PC-3 (cell line): ENCODE measurements at regions of chr2 and their contacts with region 1.

Region 1: GRCh38 chr2:97697252-97698235 is 15.8 kb upstream of the ZAP70 start:
- DNase-seq: peak; percentile 89
- ATAC-seq: peak; percentile 88
- H3K4me3 ChIP-seq: peak overlapping the region; percentile 36; the same call in 1 of the 2 replicates
- H3K27ac ChIP-seq: no peak overlapping the region
- H3K4me1 ChIP-seq: 0 out of 2 replicates have a peak, but pooled peaks cover 5% of the 10 kb centered on the region
- H3K27me3 ChIP-seq: no peaks in the 10 kb centered on the region
- CTCF ChIP-seq: peak; percentile 95

Region 2: GRCh38 chr2:97653473-97653872 is 44.1 kb before region 1 on chr2:
- CTCF ChIA-PET with region 1: no interaction called
- POLR2A ChIA-PET with region 1: no interaction called
- intact Hi-C with region 1: no loop called
- DNase-seq: peak; percentile 21
- ATAC-seq: peak; percentile 40; the same call in 1 of the 2 replicates
- H3K4me3 ChIP-seq: no peak overlapping the region
- H3K27ac ChIP-seq: no peak overlapping the region
- H3K4me1 ChIP-seq: no peaks in the 10 kb centered on the region
- H3K27me3 ChIP-seq: no peaks in the 10 kb centered on the region
- CTCF ChIP-seq: no peak

Region 3: DNA sequence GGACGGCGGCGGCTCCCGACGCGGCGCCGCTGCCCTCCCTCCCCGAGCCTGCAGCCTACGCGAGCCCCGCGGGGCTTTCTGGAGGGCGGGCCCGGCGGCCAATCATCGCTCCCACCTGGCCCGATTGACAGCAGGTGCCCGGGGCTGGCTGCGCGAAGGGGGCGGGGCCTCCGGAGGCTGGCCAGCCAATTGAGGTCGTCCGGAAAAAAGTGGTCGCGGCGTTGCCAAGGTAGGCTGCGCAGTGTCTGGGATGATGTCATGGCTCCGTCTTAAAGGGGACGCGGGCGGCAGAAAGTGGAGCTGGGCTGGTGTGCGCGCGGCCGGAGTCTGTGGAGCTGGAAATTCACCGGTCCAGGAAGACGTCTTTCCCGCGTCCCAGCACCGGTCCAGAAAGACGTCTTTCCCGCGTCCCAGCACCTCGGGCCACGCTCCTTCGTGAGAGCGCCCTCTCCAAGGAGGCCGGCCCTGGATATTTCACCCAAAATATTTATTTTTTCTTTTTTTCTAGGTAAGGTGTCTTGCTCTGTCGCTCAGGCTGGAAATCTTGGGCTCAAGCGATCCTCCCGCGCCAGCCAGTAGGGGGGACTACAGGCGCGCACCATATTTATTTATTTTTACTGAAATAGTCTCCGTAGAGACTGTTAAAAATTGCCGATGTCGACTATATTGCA is 33.4 kb before region 1 on chr2 and contains the start of gene ACTR1B:
- CTCF ChIA-PET with region 1: interaction called, 8 read pairs
- POLR2A ChIA-PET with region 1: interaction called, 4 read pairs
- intact Hi-C with region 1: loop called (anchors 1 kb)
- DNase-seq: peak; percentile 98
- ATAC-seq: peak; percentile 82
- H3K4me3 ChIP-seq: peak within 1 kb of the TSS; percentile 83
- H3K27ac ChIP-seq: peak within 1 kb of the TSS; percentile 77
- H3K4me1 ChIP-seq: peaks cover 24% of the 10 kb centered on the region
- H3K27me3 ChIP-seq: no peaks in the 10 kb centered on the region
- CTCF ChIP-seq: peak; percentile 71
- total RNA-seq, gene ACTR1B: 27.0 and 31.1 TPM in 2 replicates

Region 4: GRCh38 chr2:97718051-97718882 is 20.7 kb after region 1 on chr2:
- CTCF ChIA-PET with region 1: no interaction called
- POLR2A ChIA-PET with region 1: no interaction called
- intact Hi-C with region 1: no loop called
- DNase-seq: no peak
- ATAC-seq: no peak
- H3K4me3 ChIP-seq: no peak overlapping the region
- H3K27ac ChIP-seq: no peak overlapping the region
- H3K4me1 ChIP-seq: no peaks in the 10 kb centered on the region
- H3K27me3 ChIP-seq: no peaks in the 10 kb centered on the region
- CTCF ChIP-seq: no peak

Region 5: DNA sequence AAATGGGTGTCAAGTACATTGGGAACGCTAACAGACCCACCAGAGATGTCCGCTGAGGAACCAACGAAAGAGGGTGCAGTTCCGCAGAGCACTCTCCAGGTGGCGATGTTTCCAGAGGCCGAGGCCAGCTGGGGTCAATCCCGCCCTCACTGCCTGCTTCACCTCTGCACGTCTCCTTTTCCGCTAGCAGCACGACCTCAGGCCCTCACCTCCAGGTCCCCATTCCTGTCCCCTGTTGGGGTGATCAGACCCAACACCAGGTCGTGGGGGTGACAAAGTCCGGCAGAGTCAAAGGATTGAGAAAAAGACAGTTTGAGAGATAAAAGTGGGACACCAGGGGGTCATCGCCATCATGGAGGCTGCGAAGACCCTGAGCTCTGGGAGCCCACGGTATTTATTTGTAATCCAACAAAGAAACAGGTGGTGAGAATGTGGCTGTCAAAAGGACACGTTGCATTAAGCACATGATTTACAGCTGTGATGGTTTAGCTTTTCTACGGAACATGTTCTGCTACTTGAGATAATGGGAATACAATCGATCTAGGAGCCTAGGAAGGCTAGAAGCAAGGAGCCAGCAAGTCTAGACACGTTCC is 43.1 kb after region 1 on chr2:
- CTCF ChIA-PET with region 1: no interaction called
- POLR2A ChIA-PET with region 1: no interaction called
- intact Hi-C with region 1: no loop called
- DNase-seq: peak; percentile 49
- ATAC-seq: no peak
- H3K4me3 ChIP-seq: no peak overlapping the region
- H3K27ac ChIP-seq: no peak overlapping the region
- H3K4me1 ChIP-seq: peaks cover 11% of the 10 kb centered on the region
- H3K27me3 ChIP-seq: no peaks in the 10 kb centered on the region
- CTCF ChIP-seq: peak; percentile 75

Region 6: DNA sequence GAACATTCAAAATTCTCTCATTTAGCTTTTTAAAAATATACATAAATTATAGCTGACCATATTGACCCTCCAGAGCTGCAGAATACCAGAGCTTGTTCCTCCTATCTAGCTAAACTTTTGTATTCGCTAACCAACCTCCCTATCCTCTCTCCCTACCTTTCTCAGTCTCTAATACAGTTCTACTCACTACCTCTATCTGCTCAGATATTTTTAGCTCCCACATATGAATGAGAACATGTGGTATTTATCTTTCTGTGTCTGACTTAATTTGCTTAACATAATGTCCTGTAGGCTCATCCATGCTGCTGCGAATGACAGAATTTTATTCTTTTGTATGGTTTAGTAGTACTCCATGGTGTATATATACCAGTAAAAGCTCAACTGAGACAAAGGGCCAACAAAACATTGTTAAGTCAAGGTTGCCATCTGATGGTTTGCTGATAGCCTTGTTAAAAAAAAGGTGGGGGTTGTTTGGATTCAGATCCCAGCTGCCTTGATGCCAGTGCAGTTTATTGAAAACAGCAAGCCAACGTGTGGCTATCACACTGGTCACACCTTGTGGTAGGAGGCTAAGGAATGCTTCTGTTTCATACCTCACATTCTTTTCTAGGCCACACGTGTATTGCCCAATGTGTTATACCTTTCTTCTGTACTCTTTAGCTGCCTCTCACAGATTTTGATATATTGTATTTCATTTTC is 491.0 kb after region 1 on chr2:
- CTCF ChIA-PET with region 1: no interaction called
- POLR2A ChIA-PET with region 1: no interaction called
- intact Hi-C with region 1: loop called (anchors 5 kb)
- DNase-seq: peak; percentile 63
- ATAC-seq: no peak; the same call in 1 of the 2 replicates
- H3K4me3 ChIP-seq: no peak overlapping the region
- H3K27ac ChIP-seq: no peak overlapping the region
- H3K4me1 ChIP-seq: no peaks in the 10 kb centered on the region
- H3K27me3 ChIP-seq: peaks cover 6% of the 10 kb centered on the region; the same call in 1 of the 2 replicates
- CTCF ChIP-seq: peak; percentile 30; the same call in 1 of the 2 replicates

Region 7: DNA sequence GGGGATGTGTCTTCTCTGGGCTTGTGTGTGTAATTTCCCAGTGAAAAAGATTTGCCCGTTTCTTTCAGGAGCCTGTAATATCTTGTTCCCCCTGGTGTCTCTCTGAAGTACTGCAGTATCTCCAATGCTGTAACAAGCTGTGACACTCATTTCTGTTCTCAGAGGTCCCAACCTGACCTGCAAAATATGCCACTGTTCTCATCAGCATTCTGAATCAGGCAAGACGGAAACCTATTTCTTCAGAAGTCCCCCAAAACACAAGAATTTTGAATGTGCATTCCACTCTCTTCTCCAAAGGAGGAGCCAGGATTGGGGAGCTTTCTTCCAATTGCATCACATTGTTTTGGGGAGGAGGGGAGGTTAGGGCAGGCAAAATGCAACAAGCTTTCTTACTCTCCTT is 571.7 kb after region 1 on chr2:
- CTCF ChIA-PET with region 1: no interaction called
- POLR2A ChIA-PET with region 1: no interaction called
- intact Hi-C with region 1: loop called (anchors 5 kb)
- DNase-seq: peak; percentile 72
- ATAC-seq: peak; percentile 58
- H3K4me3 ChIP-seq: no peak overlapping the region
- H3K27ac ChIP-seq: no peak overlapping the region
- H3K4me1 ChIP-seq: no peaks in the 10 kb centered on the region
- H3K27me3 ChIP-seq: no peaks in the 10 kb centered on the region
- CTCF ChIP-seq: peak; percentile 77

Region 8: DNA sequence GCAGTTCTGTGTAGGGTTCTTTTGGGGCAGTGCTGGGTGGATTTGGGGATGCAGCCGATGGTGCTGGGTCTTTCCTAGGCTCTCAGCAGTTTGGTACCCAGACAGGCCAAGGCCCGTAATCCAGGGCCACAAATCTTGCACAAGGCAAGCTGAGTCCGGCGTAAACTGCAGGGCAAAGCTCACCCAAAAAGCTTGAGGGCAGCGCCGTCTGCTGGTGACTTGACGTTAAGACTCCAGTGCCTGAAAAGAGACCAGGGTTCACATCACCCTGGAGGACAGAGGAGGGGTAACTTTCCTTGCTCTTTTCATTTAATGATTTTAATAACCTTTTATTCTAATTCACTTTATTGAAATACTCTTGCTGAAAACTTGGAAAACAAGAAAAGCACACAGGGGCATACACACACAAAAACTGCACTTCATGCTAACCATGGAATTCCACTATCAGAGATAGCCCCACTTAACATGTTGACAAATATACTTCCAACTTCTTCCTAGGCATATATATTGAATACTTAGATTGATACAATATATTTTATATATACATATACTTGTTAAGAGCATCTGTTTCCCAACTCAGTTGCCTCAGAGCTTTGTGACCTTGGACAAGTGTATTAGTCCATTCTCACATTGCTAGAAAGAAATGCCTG is 687.6 kb after region 1 on chr2:
- CTCF ChIA-PET with region 1: no interaction called
- POLR2A ChIA-PET with region 1: no interaction called
- intact Hi-C with region 1: loop called (anchors 10 kb)
- DNase-seq: peak; percentile 88
- ATAC-seq: peak; percentile 93
- H3K4me3 ChIP-seq: no peak overlapping the region
- H3K27ac ChIP-seq: no peak overlapping the region
- H3K4me1 ChIP-seq: no peaks in the 10 kb centered on the region
- H3K27me3 ChIP-seq: no peaks in the 10 kb centered on the region
- CTCF ChIP-seq: peak; percentile 97